Endothelial cell of umbilical vein (primary cell): ENCODE measurements at regions of chr19 and their contacts with region 1.

Region 1: DNA sequence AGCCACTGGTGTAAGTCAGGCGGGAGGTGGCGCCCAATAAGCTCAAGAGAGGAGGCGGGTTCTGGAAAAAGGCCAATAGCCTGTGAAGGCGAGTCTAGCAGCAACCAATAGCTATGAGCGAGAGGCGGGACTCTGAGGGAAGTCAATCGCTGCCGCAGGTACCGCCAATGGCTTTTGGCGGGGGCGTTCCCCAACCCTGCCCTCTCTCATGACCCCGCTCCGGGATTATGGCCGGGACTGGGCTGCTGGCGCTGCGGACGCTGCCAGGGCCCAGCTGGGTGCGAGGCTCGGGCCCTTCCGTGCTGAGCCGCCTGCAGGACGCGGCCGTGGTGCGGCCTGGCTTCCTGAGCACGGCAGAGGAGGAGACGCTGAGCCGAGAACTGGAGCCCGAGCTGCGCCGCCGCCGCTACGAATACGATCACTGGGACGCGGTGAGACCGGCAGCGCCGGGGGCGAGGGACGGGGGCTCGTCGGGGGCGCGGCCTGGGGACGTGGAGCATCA is at the start of gene ALKBH7:
- DNase-seq: peak; percentile 99
- H3K4me3 ChIP-seq: peak within 1 kb of the TSS; percentile 55 to 82 (median 73)
- H3K27ac ChIP-seq: peak within 1 kb of the TSS; percentile 84
- H3K4me1 ChIP-seq: peaks cover 2% of the 10 kb centered on the region
- H3K27me3 ChIP-seq: no peaks in the 10 kb centered on the region
- CTCF ChIP-seq: no peak
- POLR2A ChIP-seq: no peak
- total RNA-seq, gene ALKBH7: 48.8 and 50.4 TPM in 2 replicates

Region 2: DNA sequence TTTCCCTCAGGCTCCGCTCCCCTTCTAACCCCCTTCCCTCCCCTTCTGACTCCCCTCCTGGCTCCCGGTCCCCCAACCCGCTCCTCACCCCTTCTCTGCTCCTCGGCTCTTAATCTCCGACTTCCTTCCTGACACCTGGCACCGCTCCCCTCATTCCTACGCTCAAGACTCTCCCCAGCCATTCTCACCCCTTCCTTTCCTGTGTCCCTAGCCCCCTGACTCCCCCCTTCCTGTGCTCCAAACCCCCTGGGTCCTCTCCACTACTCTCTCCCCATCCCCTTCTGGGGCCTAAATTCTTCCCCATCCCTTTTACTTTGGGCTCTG is 10.7 kb before region 1 on chr19:
- CTCF ChIA-PET with region 1: interaction called, 8 read pairs
- POLR2A ChIA-PET with region 1: interaction called, 16 read pairs
- dilution Hi-C with region 1: no loop called
- intact Hi-C with region 1: loop called (anchors 1 kb)
- DNase-seq: no peak
- H3K4me3 ChIP-seq: peak overlapping the region; percentile 69 to 95 (median 77)
- H3K27ac ChIP-seq: peak overlapping the region; percentile 57
- H3K4me1 ChIP-seq: peaks cover 7% of the 10 kb centered on the region
- H3K27me3 ChIP-seq: no peaks in the 10 kb centered on the region
- CTCF ChIP-seq: no peak
- POLR2A ChIP-seq: no peak

Region 3: DNA sequence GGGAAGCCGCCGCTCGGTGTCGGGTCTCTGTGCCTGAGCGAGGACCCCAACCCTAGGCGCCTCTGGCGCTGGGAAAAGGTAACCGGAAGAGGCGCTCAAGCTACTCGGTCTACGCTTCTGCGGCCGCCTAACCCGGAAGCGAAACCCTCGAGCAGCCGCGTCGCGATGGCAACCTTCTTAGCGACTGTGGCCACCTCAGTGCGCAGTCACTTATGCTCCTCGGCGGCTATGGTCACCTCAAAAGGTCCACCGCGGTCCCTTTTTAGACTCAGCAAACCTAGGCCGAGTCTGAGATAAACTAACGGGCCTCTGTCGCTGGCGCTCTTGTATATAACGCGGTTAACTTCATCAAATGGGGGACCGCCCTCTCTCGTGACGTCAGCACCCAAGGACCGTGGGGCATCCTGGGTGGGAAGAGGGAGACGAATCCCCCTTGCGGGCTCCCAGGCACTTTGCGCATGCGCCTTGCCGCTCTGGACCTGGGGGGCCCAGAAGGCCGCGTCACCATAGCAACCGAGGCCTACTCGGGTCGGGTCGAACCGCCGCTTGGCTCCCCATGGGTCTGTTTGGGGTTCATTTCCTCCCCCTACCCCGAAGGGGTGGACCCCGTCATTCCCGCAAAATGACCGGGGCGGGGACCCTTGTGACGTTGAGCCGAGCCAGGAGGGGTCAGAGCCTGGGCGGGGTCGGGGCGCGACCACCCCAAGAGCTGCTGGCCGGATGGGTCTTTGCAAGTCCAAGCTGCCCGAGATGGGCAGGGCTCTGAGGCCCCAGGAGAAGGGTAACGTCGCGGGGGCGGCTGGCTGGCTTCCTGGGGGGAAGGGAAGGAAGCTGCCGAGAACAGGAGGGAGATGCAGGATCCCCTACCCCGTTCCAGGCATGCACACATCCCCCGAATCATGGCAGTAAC is 20.7 kb after region 1 on chr19 and contains the start of gene GTF2F1:
- CTCF ChIA-PET with region 1: no interaction called
- POLR2A ChIA-PET with region 1: no interaction called
- dilution Hi-C with region 1: no loop called
- intact Hi-C with region 1: loop called (anchors 1 kb)
- DNase-seq: peak; percentile 92
- H3K4me3 ChIP-seq: peak within 1 kb of the TSS; percentile 42 to 77 (median 74)
- H3K27ac ChIP-seq: peak within 1 kb of the TSS; percentile 77
- H3K4me1 ChIP-seq: peaks cover 7% of the 10 kb centered on the region
- H3K27me3 ChIP-seq: no peaks in the 10 kb centered on the region
- CTCF ChIP-seq: peak in 1 of 2 donors; percentile 9
- POLR2A ChIP-seq: peak; percentile 75
- total RNA-seq, gene GTF2F1: 56.4 and 58.2 TPM in 2 replicates